Right lobe of liver (tissue), 6 donors: ENCODE measurements at regions of chr11 and their contacts with region 1.

Region 1: DNA sequence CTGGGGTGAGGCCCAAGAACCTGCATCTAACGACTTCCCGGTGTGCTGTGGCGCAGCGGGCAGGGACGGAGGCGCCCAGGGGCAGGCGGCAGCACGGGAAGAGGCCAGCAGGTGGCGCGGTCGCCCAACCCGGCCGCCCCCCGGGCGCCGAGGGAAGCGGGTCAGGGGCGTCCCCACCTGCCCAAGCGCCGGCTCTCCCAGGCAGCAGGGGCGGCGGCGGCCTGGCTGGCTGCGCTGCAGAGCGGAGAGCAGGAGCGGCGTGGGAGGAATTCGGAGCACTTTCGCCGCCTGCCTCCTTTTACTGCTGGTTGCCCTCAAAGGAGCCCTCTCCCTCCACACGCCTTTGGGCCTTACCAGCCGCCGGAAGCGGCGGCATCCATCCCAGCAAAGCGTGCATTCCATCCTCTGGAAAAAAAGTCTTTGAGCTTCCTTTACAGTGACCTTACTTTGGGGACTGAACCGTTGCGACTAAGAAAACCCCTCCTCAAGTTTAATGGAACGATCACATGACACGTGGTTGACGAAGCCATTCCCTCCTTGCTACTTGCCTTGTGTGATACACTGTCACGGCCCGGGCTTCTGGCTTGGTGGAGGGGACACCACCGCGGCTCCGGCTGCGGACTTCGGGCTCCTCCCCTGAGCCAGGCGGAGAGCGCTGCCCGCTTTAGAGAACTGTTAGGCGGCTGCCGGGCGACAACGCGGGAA is 106.8 kb upstream of the CLMP start:
- DNase-seq: peak; percentile 57 to 71 (median 61)
- ATAC-seq: peak; percentile 83 to 95 (median 92)
- H3K4me3 ChIP-seq: peak overlapping the region; percentile 4 to 39 (median 30)
- H3K27ac ChIP-seq: no peak overlapping the region
- H3K4me1 ChIP-seq: peaks cover 0 to 15% (median 2%) of the 10 kb centered on the region in 4 donors
- H3K27me3 ChIP-seq: no peaks in the 10 kb centered on the region
- CTCF ChIP-seq: peak; percentile 50 to 94 (median 81)
- POLR2A ChIP-seq: no peak

Region 2: DNA sequence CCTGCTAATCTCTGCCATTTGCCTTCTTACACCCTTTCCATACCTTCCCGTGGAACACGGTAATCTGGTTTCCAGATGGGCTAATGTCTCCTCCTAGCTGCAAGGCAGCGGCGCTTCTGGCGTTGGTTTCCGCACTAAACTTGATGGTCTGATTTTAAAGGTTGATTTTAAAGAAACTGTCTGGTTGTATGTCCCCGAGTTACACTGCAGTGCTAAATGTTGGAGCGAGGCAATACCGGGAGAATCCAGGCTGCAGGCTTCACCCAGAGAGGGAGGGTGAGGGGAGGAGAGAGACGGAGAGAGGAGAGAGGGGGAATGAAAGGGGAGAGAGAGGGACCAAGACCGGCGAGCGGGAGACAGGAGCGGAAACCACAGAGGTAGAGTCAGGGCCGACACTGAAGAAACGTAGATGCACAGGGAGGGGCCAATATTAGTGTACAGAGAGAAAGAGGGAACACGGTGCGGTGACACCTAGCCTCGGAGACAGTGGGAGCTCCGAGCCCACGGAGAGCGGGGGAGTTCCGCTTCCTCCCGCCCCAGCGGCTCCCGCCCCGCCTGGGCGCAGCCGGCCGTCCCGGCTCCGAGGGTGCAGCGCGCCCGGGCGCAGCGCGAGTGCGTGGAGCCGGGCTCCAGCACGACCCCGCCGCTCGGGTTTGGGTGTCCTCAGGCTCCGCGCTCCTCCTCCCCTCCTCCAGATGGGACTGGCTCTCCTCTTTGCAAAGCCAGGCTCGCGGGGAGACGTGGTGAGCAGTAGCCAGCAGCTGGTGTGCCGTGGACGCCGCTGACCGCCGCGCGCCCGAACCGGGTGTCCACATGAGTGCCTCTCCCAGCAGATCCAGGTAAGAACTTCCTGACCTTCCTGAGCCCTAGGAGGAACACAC is 56.4 kb after region 1 on chr11:
- intact Hi-C with region 1: loop called in 1 of 2 experiments (anchors 10 kb)
- DNase-seq: peak in 1 of 3 donors; percentile 17
- ATAC-seq: peak in 1 of 4 donors; percentile 11
- H3K4me3 ChIP-seq: no peak overlapping the region
- H3K27ac ChIP-seq: no peak overlapping the region
- H3K4me1 ChIP-seq: no peaks in the 10 kb centered on the region
- H3K27me3 ChIP-seq: no peaks in the 10 kb centered on the region
- CTCF ChIP-seq: no peak
- POLR2A ChIP-seq: no peak